B cell (primary cell): ENCODE measurements at regions of chr13 and their contacts with region 1.

Region 1: DNA sequence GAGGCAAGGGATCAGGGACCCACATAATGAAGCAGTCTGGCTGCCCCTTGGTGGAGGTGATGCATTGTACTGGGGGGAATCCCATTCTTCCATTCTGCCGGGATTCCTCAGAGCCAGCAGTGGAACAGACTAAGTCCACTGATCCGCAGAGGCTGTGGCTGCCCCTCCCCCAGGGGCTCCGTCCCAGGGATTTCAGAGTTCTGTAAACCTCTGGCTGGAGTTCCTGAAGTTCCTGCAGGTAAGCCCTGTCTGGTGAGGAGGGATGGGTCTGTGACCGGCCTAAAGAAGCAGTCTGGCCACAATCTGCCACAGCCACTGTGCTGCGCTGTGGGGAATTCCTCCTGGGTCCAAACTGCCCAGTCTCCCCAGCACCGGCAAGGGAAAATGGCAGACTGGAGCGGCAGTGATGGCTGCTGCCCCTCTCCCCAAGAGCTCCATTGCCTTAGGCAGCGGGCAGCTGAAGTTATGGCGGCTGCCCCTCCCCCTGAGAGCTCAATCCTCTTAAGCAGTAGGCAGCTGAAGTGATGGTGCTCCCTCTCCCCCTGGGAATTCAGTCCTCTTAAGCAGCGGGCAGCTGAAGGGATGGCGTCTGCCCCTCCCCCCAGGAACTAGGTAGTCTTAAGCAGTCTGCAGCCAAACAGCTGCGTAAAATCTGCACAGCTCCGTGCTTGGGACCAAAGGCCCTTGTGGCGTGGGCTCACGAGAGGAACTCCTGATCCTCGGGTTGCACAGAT is 155.7 kb downstream of the PCDH17 start:
- DNase-seq: no peak
- ATAC-seq: no peak
- H3K4me3 ChIP-seq: no peak overlapping the region
- H3K4me3 Mint-ChIP-seq: no peak overlapping the region
- H3K27ac ChIP-seq: no peak overlapping the region
- H3K27ac Mint-ChIP-seq: no peak overlapping the region
- H3K4me1 ChIP-seq: no peaks in the 10 kb centered on the region
- H3K4me1 Mint-ChIP-seq: no peaks in the 10 kb centered on the region
- H3K27me3 ChIP-seq: no peaks in the 10 kb centered on the region
- H3K27me3 Mint-ChIP-seq: no peaks in the 10 kb centered on the region
- CTCF ChIP-seq: no peak

Region 2: GRCh38 chr13:56586966-56587365 is 1200.3 kb before region 1 on chr13:
- CTCF ChIA-PET with region 1: no interaction called
- POLR2A ChIA-PET with region 1: no interaction called
- intact Hi-C with region 1: loop called (anchors 10 kb)
- DNase-seq: no peak
- ATAC-seq: no peak
- H3K4me3 ChIP-seq: no peak overlapping the region
- H3K4me3 Mint-ChIP-seq: no peak overlapping the region
- H3K27ac ChIP-seq: no peak overlapping the region
- H3K27ac Mint-ChIP-seq: no peak overlapping the region
- H3K4me1 ChIP-seq: no peaks in the 10 kb centered on the region
- H3K4me1 Mint-ChIP-seq: no peaks in the 10 kb centered on the region
- H3K27me3 ChIP-seq: no peaks in the 10 kb centered on the region
- H3K27me3 Mint-ChIP-seq: no peaks in the 10 kb centered on the region
- CTCF ChIP-seq: no peak